ENCODE measurements at regions of chr12 and their contacts with region 1.

Region 1: GRCh38 chr12:122078141-122079032 is at the start of gene MLXIP:
- DNase-seq: peak; percentile 89 to 97 (median 94)
- H3K4me3 ChIP-seq: peak within 1 kb of the TSS; percentile 63 to 96 (median 82)
- H3K27ac ChIP-seq: peak within 1 kb of the TSS in 57 of 59 donors; percentile 12 to 87 (median 69)
- H3K27me3 ChIP-seq: no peaks in the 10 kb centered on the region
- CTCF ChIP-seq: peak in 17 of 56 donors; percentile 5 to 46 (median 22)
- total RNA-seq, gene MLXIP: 22.2 to 78.4 (median 49.7) TPM

Region 2: DNA sequence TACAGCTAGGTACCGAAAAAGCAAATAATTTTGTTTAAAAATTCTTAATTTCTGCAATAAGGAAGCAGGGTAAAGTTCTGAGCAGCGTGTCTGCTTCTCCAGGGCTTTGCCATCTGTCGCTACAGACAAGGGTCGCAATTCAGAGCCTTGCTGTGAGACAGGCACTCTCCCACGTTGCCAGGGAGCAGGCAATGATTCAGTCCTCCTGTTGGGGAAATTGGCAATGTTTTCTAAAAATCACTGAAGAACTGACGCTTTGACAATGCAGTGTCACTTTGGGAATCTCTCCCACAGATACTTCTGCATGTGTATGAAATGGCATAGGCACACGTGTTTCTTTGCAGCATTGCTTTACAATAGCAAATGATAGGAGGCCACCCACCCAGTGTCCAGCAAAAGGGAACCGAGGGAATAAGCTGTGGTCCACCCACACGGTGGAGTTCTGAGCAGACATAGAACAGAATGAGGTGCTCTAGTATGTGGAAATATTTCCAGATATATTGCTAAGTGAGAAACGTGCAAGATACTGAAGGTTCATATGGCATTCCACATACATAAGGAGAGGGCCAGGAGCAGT is 740.9 kb after region 1 on chr12:
- intact Hi-C with region 1: loop called in 1 of 2 experiments (anchors 5 kb)
- DNase-seq: peak in 5 of 10 donors; percentile 43 to 62 (median 53)
- H3K4me3 ChIP-seq: peak overlapping the region in 1 of 59 donors; percentile 12
- H3K27ac ChIP-seq: peak overlapping the region in 10 of 59 donors; percentile 2 to 48 (median 23)
- H3K27me3 ChIP-seq: no peaks in the 10 kb centered on the region
- CTCF ChIP-seq: no peak

Measured in dorsolateral prefrontal cortex (tissue), 120 donors.